ENCODE measurements at regions of chr5 and their contacts with region 1.

Region 1: GRCh38 chr5:112419986-112420864 is 1.1 kb upstream of the EPB41L4A start:
- DNase-seq: peak; percentile 12
- ATAC-seq: peak; percentile 96
- H3K4me3 ChIP-seq: peak overlapping the region; percentile 46 to 57
- H3K27ac ChIP-seq: no peak overlapping the region
- H3K4me1 ChIP-seq: 0 out of 2 replicates have a peak, but pooled peaks cover 3% of the 10 kb centered on the region
- H3K27me3 ChIP-seq: peaks cover 41% of the 10 kb centered on the region
- CTCF ChIP-seq: peak; percentile 94

Region 2: GRCh38 chr5:112174959-112175594 is 245.1 kb before region 1 on chr5:
- CTCF ChIA-PET with region 1: interaction called, 11 read pairs
- POLR2A ChIA-PET with region 1: no interaction called
- in situ Hi-C with region 1: no loop called
- intact Hi-C with region 1: loop called (anchors 2 kb)
- DNase-seq: no peak
- ATAC-seq: peak; percentile 90
- H3K4me3 ChIP-seq: no peak overlapping the region
- H3K27ac ChIP-seq: no peak overlapping the region
- H3K4me1 ChIP-seq: peaks cover 4% of the 10 kb centered on the region; the same call in 1 of the 2 replicates
- H3K27me3 ChIP-seq: peaks cover 7% of the 10 kb centered on the region
- CTCF ChIP-seq: peak; percentile 78

Region 3: GRCh38 chr5:112210430-112211005 is 209.7 kb before region 1 on chr5:
- CTCF ChIA-PET with region 1: interaction called, 3 read pairs
- POLR2A ChIA-PET with region 1: no interaction called
- in situ Hi-C with region 1: no loop called
- intact Hi-C with region 1: loop called (anchors 1 kb)
- DNase-seq: no peak
- ATAC-seq: peak; percentile 65; the same call in 1 of the 2 replicates
- H3K4me3 ChIP-seq: no peak overlapping the region
- H3K27ac ChIP-seq: no peak overlapping the region
- H3K4me1 ChIP-seq: no peaks in the 10 kb centered on the region
- H3K27me3 ChIP-seq: no peaks in the 10 kb centered on the region
- CTCF ChIP-seq: peak; percentile 74

Measured in Panc1 (cell line).